ENCODE measurements at regions of chr12 and their contacts with region 1.

Region 1: DNA sequence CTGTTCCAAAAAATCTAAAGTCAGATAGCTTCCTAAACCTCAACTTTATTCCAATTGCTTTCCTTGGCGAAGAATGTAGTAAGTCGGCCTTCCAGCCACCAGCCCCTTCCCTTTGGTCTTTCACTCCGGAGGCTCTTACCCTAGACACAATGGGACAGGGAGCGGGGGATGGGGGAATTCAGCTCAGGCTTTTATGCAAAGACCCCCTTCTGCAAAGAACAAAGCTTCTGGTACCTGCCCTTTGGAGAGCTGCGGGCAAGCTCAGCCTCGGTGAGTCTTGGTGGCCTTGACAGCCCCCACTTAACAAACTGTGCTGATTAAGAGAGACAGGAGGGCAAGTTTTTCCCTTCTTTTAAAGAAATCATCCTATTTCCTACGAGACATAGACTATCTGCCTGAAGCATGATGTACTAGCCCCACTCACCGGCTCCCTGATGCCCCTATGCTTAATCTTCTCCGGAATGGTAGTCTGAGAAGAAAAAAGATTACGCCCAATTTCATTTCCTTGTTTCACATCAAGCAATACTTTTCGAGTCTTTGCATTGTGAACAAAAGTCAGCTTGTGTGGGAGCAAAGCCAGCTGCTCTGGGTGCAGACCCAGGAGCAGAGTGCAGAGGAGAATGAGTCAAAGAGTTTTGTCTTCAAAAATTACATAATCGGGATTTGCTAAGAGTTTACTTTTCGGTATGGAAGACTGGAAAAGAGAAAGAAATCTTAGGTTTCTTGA is 1.5 kb upstream of the NANOG start:
- DNase-seq: no peak
- H3K27ac ChIP-seq: no peak overlapping the region
- CTCF ChIP-seq: no peak

Region 2: DNA sequence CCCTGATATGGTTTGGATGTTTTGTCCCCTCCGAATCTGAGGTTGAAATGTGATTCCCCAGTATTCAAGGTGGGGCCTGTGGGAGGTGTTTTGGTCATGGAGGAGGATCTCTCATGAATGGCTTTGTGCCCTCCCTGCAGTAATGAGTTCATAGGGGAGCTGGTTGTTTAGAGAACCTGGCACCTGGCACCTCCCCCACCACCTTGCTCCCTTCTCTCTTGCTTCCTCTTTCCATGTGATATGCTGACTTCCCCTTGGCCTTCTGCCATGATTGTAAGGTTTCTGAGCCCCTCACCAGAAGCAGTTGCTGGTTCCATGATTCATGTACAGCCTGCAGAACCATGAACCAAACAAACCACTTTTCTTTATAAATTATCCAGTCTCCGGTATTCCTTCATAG is 376.4 kb before region 1 on chr12:
- CTCF ChIA-PET with region 1: no interaction called
- POLR2A ChIA-PET with region 1: no interaction called
- DNase-seq: no peak
- H3K27ac ChIP-seq: no peak overlapping the region
- CTCF ChIP-seq: no peak

Region 3: GRCh38 chr12:7751394-7751793 is 36.3 kb before region 1 on chr12:
- CTCF ChIA-PET with region 1: no interaction called
- POLR2A ChIA-PET with region 1: interaction called, 12 read pairs
- DNase-seq: no peak
- H3K27ac ChIP-seq: no peak overlapping the region
- CTCF ChIP-seq: no peak

Measured in RWPE1 (cell line).